SK-N-SH (cell line): ENCODE measurements at regions of chr1 and their contacts with region 1.

Region 1: DNA sequence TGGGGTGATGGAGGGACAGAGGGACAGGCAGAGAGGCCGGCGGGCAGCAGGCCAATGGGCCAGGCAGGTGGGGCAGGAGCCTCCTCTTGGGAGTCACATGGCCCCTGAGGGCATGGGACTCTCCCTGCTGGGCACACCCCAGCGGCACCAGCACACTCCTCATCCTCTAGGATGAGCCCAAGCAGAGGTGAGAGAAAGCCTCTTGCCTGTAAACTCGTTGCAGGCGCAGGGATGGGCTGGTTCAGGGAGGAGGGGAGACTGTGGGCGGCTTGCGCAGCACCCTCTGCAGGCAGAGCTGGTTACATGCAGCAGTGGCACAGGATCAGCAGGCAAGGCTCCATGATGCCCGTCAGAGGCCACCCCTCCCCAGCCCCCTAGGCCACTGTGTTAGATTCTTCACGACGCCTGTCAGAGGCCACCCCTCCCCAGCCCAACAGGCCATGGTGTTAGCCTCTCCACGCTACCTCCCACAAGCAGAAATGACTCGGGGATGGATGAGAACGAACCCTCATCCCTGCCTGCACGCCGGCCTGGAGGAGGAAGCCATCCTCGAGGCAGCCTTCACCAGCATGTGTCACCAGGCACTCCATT is 209.7 kb upstream of the VAMP3 start:
- DNase-seq: peak; percentile 69
- H3K4me3 ChIP-seq: no peak overlapping the region
- H3K27ac ChIP-seq: peak overlapping the region in 1 of 2 experiments; percentile 100; a peak in 2 of 4 replicates
- H3K4me1 ChIP-seq: peaks cover 0 to 71% of the 10 kb centered on the region in 2 experiments; a peak in 2 of 4 replicates
- H3K27me3 ChIP-seq: no peaks in the 10 kb centered on the region
- CTCF ChIP-seq: peak; percentile 35
- EP300 ChIP-seq: no peak
- RAD21 ChIP-seq: peak; percentile 43

Region 2: DNA sequence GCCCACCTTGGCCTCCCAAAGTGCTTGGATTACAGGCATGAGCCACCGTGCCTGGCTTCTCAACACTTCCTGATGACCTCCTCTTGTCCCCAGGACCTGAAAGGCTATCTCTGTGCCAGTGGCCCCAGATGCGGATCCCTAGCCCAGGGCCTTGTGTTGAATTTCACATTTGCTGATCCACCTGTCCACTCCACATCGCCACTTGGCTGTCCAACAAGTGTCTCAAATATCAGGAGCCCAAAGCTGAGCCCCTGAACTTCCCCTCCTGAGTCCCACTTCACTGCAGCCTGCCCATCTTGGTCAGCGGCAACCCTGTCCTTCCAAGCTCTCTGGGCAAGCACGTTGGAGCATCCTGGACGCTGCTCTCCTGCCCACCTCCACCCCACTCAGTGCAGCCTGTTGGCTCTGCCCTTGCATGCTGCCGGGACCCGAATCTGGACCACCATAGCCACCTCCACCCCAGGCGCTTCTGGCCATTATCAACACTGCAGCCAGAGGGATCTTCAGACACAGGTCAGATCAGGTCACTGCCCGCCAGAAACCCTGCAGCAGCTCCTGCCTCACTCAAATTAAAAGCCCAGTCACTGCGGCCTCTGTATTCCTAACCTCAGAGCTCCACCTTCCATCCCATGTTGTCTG is 142.9 kb before region 1 on chr1:
- CTCF ChIA-PET with region 1: no interaction called
- POLR2A ChIA-PET with region 1: no interaction called
- DNase-seq: peak; percentile 12
- H3K4me3 ChIP-seq: no peak overlapping the region
- H3K27ac ChIP-seq: no peak overlapping the region
- H3K4me1 ChIP-seq: peaks cover 0 to 13% of the 10 kb centered on the region in 2 experiments; a peak in 1 of 4 replicates
- H3K27me3 ChIP-seq: no peaks in the 10 kb centered on the region
- CTCF ChIP-seq: no peak
- EP300 ChIP-seq: no peak
- RAD21 ChIP-seq: no peak

Region 3: GRCh38 chr1:7470880-7471638 is 90.4 kb before region 1 on chr1:
- CTCF ChIA-PET with region 1: no interaction called
- POLR2A ChIA-PET with region 1: no interaction called
- DNase-seq: peak; percentile 68
- H3K4me3 ChIP-seq: no peak overlapping the region
- H3K27ac ChIP-seq: peak overlapping the region; percentile 75 to 94
- H3K4me1 ChIP-seq: peaks cover 20 to 69% of the 10 kb centered on the region in 2 experiments; a peak in 3 of 4 replicates
- H3K27me3 ChIP-seq: no peaks in the 10 kb centered on the region
- CTCF ChIP-seq: no peak
- EP300 ChIP-seq: peak in 1 of 2 experiments; percentile 53; a peak in 1 of 4 replicates
- RAD21 ChIP-seq: no peak

Region 4: DNA sequence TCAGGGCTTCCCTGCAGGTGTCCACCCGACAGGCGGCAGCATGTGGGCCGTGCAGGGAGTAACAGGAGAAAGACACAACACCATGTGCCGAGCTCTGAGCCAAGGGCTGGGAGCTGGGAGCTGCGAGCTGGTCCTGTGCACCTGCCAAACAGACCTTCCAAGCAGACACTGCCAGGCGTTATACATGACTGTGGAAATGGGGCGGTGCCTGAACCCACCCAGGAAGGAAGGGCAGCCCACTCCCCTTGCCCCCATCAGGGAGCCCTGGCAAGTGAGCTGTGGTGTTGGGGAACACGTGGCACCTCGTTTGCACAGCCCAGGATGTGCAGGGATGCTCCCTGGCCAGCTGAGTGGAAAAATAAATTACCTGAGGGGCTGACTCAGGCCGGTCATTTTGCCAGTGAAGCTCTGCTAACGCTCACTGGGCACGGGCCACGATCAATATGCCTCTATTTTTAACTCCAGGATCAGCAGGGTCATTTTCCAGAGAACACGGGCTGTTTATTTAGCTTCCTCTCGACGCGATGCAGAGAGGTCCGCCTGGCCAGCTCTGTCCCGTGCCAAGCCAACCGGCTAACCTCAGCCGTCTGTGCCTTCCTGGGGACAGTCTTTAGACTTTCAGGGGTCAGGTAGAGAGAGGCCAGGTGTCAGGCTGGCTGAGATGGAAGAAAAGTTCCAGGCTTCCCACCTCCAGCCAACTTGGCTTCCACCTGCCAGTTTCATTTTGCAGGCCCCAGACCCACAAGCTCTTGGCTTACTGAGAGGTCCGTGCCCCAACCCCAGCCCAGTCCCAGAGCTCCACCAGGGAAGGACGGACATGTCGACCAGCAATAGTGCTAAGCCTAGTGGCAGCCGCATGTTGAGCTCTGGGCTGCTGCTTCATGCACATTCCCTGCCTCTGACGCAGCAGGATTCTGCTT is 13.0 kb after region 1 on chr1:
- CTCF ChIA-PET with region 1: interaction called, 21 read pairs
- POLR2A ChIA-PET with region 1: interaction called, 13 read pairs
- DNase-seq: no peak
- H3K4me3 ChIP-seq: no peak overlapping the region
- H3K27ac ChIP-seq: peak overlapping the region in 1 of 2 experiments; percentile 39; a peak in 1 of 4 replicates
- H3K4me1 ChIP-seq: peaks cover 0 to 31% of the 10 kb centered on the region in 2 experiments; a peak in 1 of 4 replicates
- H3K27me3 ChIP-seq: no peaks in the 10 kb centered on the region
- CTCF ChIP-seq: no peak
- EP300 ChIP-seq: no peak
- RAD21 ChIP-seq: no peak

Region 5: DNA sequence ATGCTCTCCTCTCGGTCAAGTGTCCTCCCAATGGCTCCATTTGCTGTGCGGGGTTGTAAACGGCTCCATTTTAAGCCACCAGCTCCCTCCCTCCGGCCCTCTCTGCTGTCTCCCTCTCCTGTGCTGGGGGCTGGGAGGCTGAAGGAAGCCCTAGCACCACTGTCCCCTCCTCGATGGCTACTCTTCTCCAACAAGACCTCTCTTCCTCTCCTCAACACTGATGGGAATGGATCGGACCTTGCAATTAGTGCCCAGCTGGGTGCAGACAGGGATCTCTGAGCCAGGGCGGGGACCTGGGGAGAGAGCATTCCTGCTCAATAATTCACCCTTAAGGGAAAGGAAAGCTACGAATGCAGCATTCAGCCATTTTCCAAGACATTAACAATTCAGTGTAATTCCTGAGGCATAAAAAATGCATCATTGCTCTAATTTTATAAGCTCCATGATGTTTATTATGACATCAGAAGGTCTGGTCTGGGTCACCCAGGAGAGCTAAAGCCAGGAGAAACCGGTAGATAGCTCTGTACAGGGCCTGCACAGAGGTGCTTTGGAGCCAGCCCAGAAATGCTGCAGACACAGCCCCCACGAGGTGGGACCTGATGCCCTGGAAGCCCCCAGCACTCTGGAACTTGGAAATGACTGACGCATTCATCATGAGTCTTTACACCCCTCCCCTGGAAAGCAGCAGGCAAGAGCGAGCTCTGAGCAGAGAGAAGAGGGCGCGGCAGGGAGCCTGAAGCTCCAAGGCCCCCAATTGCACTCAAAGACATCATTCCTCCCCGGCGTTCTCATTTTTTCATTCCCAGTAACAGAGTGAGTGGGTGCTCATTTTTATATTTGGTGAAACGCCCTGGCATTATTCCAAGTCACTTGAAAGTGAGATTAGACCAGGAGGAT is 133.4 kb after region 1 on chr1:
- CTCF ChIA-PET with region 1: no interaction called
- POLR2A ChIA-PET with region 1: no interaction called
- DNase-seq: no peak
- H3K4me3 ChIP-seq: no peak overlapping the region
- H3K27ac ChIP-seq: no peak overlapping the region
- H3K4me1 ChIP-seq: peaks cover 0 to 12% of the 10 kb centered on the region in 2 experiments; a peak in 1 of 4 replicates
- H3K27me3 ChIP-seq: no peaks in the 10 kb centered on the region
- CTCF ChIP-seq: no peak
- EP300 ChIP-seq: no peak
- RAD21 ChIP-seq: no peak

Region 6: GRCh38 chr1:8323706-8324105 is 762.3 kb after region 1 on chr1:
- CTCF ChIA-PET with region 1: no interaction called
- POLR2A ChIA-PET with region 1: no interaction called
- DNase-seq: no peak
- H3K4me3 ChIP-seq: no peak overlapping the region
- H3K27ac ChIP-seq: no peak overlapping the region
- H3K4me1 ChIP-seq: no peaks in the 10 kb centered on the region; a peak in 1 of 4 replicates
- H3K27me3 ChIP-seq: no peaks in the 10 kb centered on the region
- CTCF ChIP-seq: no peak
- EP300 ChIP-seq: no peak
- RAD21 ChIP-seq: no peak